ENCODE measurements at regions of chr18 and their contacts with region 1.

Region 1: GRCh38 chr18:864872-865273 is 39.8 kb upstream of the ADCYAP1 start:
- DNase-seq: peak; percentile 16 to 40 (median 16)
- H3K4me3 ChIP-seq: no peak overlapping the region
- H3K4me3 Mint-ChIP-seq: peak overlapping the region in 1 of 2 donors; percentile 30
- H3K27ac ChIP-seq: no peak overlapping the region
- H3K27ac Mint-ChIP-seq: no peak overlapping the region
- H3K4me1 ChIP-seq: no peaks in the 10 kb centered on the region
- H3K4me1 Mint-ChIP-seq: peaks cover 4% of the 10 kb centered on the region
- H3K27me3 ChIP-seq: peaks cover 0 to 13% of the 10 kb centered on the region in 2 donors
- H3K27me3 Mint-ChIP-seq: peaks cover 13 to 35% (median 18%) of the 10 kb centered on the region in 3 donors
- CTCF ChIP-seq: peak; percentile 87

Region 2: DNA sequence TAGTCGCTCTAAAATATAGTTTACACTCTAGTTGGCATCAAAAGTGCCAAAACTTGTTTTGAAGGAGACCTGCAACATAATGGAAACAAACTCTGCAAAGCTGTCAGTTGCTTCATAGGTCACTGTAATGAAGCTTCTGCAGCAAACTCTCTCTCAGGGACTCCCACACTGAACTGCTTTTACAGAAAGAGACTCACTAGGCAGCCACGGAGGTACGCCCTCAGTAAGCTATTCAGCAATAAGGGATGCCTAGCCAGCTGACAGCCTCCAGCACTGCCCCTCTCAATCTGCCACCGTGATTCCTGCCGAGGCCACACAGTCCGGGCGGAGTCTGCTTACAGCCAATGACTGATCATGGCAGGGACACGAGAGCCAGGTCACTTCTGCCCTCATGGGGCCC is 415.5 kb before region 1 on chr18:
- intact Hi-C with region 1: no loop called
- DNase-seq: no peak
- H3K4me3 ChIP-seq: no peak overlapping the region
- H3K4me3 Mint-ChIP-seq: no peak overlapping the region
- H3K27ac ChIP-seq: no peak overlapping the region
- H3K27ac Mint-ChIP-seq: no peak overlapping the region
- H3K4me1 ChIP-seq: peaks cover 32 to 33% of the 10 kb centered on the region in 2 donors
- H3K4me1 Mint-ChIP-seq: peaks cover 36% of the 10 kb centered on the region
- H3K27me3 ChIP-seq: no peaks in the 10 kb centered on the region
- H3K27me3 Mint-ChIP-seq: peaks cover 0 to 2% (median 2%) of the 10 kb centered on the region in 3 donors
- CTCF ChIP-seq: no peak

Region 3: DNA sequence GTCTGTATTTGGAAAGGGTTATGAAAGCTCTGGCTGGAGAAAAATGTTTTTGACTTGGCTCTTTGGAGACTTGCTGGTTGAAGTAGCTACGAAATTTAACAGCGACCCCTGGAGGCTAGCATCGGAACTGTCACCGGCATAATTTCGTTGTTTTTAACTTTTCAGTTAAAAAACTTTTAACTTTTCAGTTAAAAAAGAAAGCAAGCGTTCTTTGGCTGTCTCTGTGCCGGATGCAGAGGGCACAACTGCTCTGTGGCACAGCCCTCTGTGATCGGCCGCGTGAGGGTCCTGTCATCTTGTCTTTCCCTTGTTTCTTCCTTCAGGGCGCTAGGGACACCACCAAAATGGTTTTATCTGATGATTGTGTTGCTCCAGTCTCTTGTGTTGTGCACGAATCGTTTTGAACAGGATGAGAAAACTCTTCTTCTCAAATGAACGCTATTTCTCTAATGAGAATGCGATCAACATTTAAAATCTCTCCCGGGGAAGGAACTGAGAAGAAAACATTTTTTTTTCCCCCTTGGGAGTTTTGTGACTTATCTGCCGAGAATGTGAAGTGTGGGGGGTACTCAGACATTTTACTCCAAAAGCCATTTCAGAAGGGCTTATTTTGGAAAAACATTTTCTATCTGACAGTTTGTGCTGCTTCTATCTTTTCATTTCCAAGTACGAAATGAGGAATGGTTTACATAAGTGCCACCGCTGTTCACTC is 96.9 kb after region 1 on chr18:
- intact Hi-C with region 1: loop called in 1 of 2 experiments (anchors 10 kb)
- DNase-seq: no peak
- H3K4me3 ChIP-seq: no peak overlapping the region
- H3K4me3 Mint-ChIP-seq: peak overlapping the region in 1 of 2 donors; percentile 73
- H3K27ac ChIP-seq: no peak overlapping the region
- H3K27ac Mint-ChIP-seq: no peak overlapping the region
- H3K4me1 ChIP-seq: peaks cover 0 to 3% of the 10 kb centered on the region in 2 donors
- H3K4me1 Mint-ChIP-seq: peaks cover 6% of the 10 kb centered on the region
- H3K27me3 ChIP-seq: no peaks in the 10 kb centered on the region
- H3K27me3 Mint-ChIP-seq: peaks cover 9 to 16% (median 13%) of the 10 kb centered on the region in 3 donors
- CTCF ChIP-seq: peak; percentile 91

Region 4: GRCh38 chr18:1663879-1664705 is 799.2 kb after region 1 on chr18:
- intact Hi-C with region 1: loop called in 1 of 2 experiments (anchors 10 kb)
- DNase-seq: peak; percentile 23 to 57 (median 41)
- H3K4me3 ChIP-seq: no peak overlapping the region
- H3K4me3 Mint-ChIP-seq: peak overlapping the region in 1 of 2 donors; percentile 79
- H3K27ac ChIP-seq: no peak overlapping the region
- H3K27ac Mint-ChIP-seq: no peak overlapping the region
- H3K4me1 ChIP-seq: peaks cover 0 to 3% of the 10 kb centered on the region in 2 donors
- H3K4me1 Mint-ChIP-seq: peaks cover 4% of the 10 kb centered on the region
- H3K27me3 ChIP-seq: no peaks in the 10 kb centered on the region
- H3K27me3 Mint-ChIP-seq: peaks cover 0 to 8% (median 5%) of the 10 kb centered on the region in 3 donors
- CTCF ChIP-seq: peak; percentile 94

Measured in CD14-positive monocyte (primary cell).